HepG2 (cell line): ENCODE measurements at regions of chr15 and their contacts with region 1.

Region 1: GRCh38 chr15:34055853-34056595 is 17.0 kb upstream of the AVEN start:
- DNase-seq: no peak
- ATAC-seq: no peak
- H3K4me3 ChIP-seq: no peak overlapping the region
- H3K27ac ChIP-seq: no peak overlapping the region
- H3K4me1 ChIP-seq: peaks cover 8% of the 10 kb centered on the region; the same call in 1 of the 2 replicates
- H3K27me3 ChIP-seq: no peaks in the 10 kb centered on the region
- CTCF ChIP-seq: no peak
- EP300 ChIP-seq: no peak
- POLR2A ChIP-seq: no peak
- RAD21 ChIP-seq: no peak

Region 2: GRCh38 chr15:33915571-33916407 is 140.2 kb before region 1 on chr15:
- CTCF ChIA-PET with region 1: no interaction called
- POLR2A ChIA-PET with region 1: no interaction called
- in situ Hi-C with region 1: no loop called
- intact Hi-C with region 1: no loop called
- DNase-seq: peak; percentile 11
- ATAC-seq: no peak; the same call in 1 of the 3 replicates
- H3K4me3 ChIP-seq: no peak overlapping the region
- H3K27ac ChIP-seq: no peak overlapping the region
- H3K4me1 ChIP-seq: peaks cover 7% of the 10 kb centered on the region; the same call in 1 of the 2 replicates
- H3K27me3 ChIP-seq: no peaks in the 10 kb centered on the region
- CTCF ChIP-seq: no peak
- EP300 ChIP-seq: no peak
- POLR2A ChIP-seq: no peak
- RAD21 ChIP-seq: no peak

Region 3: DNA sequence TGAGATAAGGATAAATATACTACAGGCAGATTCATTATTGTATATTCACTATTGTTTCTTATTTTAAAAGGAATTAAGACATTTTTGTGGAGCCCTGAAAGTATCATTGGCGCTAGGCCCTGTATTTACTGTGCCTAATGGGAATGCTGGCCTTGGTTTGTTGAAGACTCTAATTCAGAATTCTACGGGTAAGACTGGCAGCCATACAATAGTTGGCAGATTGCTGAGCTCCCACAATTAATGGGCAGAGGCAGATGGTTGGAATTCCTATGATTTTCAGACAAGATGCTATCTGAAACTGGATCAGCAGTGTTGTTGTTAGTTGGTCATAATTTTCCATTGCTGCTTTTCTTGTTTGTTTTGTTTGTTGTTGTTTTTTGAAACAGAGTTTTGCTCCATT is 60.6 kb after region 1 on chr15:
- CTCF ChIA-PET with region 1: no interaction called
- POLR2A ChIA-PET with region 1: no interaction called
- in situ Hi-C with region 1: no loop called
- intact Hi-C with region 1: loop called (anchors 5 kb)
- DNase-seq: no peak
- ATAC-seq: no peak
- H3K4me3 ChIP-seq: no peak overlapping the region
- H3K27ac ChIP-seq: no peak overlapping the region
- H3K4me1 ChIP-seq: no peaks in the 10 kb centered on the region
- H3K27me3 ChIP-seq: no peaks in the 10 kb centered on the region
- CTCF ChIP-seq: no peak
- EP300 ChIP-seq: no peak
- POLR2A ChIP-seq: no peak
- RAD21 ChIP-seq: no peak

Region 4: DNA sequence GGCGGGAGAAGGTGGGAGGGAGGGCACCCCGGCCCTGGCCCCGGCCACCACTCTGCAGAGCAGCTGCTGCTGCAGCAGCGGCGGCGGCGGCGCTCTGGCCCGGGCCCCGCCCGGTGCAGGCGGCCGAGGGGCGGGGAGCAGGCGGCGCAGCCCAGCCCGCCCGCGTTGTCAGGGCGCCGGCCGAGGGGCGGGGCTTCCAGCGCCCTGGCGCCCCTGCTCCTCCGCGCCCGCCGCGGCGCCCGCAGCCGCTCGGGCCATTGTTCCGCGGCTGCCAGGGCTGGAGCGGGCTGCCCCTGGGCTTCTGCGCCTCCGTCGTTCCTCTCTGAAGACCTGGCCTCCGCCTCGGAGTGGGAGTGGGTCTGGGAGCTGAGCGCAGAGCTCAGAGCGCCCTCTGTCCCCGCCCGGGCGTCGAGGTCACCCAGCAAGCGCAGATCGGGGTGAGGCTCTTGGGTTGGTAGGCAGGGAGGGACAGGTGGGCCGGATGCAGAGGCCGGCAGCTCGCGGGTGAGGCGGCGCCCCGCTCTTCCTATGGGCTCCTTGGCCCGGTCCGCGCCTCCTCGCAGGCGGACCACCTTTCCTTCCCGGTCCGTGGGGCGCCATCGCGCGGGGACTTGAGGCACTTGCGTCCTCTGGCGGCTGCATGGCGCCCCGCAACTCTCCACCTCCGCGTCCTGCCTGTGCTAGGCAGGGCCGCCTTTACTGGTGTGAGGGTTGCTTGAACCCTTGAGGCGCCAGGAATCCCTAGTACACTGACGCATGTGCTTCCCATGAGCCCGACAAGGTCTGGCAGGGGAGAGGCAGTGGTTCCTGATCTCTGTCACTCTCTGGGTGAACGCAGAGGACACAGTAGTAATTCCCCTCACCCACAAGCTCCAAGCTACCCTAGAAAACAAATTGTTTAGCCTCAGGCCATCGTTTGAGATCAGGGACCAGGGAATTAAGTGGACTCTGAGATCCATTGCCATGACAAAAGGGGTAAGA is 311.4 kb after region 1 on chr15 and contains the start of gene LPCAT4:
- CTCF ChIA-PET with region 1: no interaction called
- POLR2A ChIA-PET with region 1: no interaction called
- in situ Hi-C with region 1: loop called (anchors 25 kb)
- intact Hi-C with region 1: no loop called
- DNase-seq: peak; percentile 66
- ATAC-seq: peak; percentile 90
- H3K4me3 ChIP-seq: peak within 1 kb of the TSS; percentile 59 to 94 (median 87)
- H3K27ac ChIP-seq: peak within 1 kb of the TSS; percentile 94
- H3K4me1 ChIP-seq: peaks cover 21% of the 10 kb centered on the region
- H3K27me3 ChIP-seq: no peaks in the 10 kb centered on the region
- CTCF ChIP-seq: peak; percentile 98
- EP300 ChIP-seq: 0 out of 4 replicates have a peak, but pooled peaks of 1 of the 2 experiments have one; percentile 18
- POLR2A ChIP-seq: peak; percentile 74 to 87
- RAD21 ChIP-seq: peak; percentile 84
- total RNA-seq, gene LPCAT4: 2.2 and 8.1 TPM in 2 replicates

Region 5: DNA sequence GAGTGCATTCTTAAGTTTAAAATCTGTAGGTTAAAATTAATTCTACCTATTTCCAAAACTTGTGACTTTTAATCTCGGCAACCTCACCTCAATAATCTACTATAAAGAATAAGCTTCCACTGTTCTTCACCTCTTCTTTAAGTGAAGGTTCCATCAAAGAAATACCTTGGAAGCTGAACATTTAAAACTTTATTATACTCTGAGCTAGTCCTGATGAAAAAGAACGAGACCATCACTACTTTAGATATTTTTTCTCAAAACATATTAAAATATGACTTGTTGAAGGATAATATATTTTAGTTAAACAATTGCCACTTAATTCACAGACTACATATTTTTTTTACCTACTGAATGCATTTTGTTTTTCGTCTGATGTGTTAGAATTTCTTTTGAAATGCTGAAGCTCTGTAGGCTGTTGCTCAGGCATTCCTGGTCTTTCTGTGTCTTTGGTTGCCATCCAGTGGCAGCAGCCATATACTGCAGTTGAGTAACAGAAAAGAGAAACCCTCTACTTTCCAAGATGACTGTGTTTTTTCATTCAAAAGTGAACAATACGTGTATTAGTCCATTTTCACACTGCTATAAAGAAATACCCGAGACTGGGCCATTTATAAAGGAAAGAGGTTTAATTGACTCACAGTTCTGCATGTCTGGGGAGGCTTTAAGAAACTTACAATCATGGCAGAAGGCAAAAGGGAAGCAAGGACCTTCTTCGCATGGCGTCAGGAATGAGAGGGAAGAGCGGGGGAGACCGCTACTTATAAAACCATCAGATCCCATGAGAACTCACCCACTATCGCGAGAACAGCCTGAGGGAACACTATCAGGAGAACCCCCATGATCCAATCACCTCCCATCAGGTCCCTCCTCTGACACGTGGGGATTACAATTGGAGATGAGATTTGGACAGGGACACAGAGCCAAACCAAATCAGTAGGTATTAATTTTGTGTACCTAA is 532.0 kb after region 1 on chr15:
- CTCF ChIA-PET with region 1: no interaction called
- POLR2A ChIA-PET with region 1: no interaction called
- in situ Hi-C with region 1: loop called (anchors 25 kb)
- intact Hi-C with region 1: no loop called
- DNase-seq: peak; percentile 80
- ATAC-seq: peak; percentile 42
- H3K4me3 ChIP-seq: peak overlapping the region; percentile 19 to 44 (median 40); a peak in 1 of 6 replicates
- H3K27ac ChIP-seq: no peak overlapping the region
- H3K4me1 ChIP-seq: peaks cover 12% of the 10 kb centered on the region; the same call in 1 of the 2 replicates
- H3K27me3 ChIP-seq: no peaks in the 10 kb centered on the region
- CTCF ChIP-seq: peak; percentile 85
- EP300 ChIP-seq: no peak
- POLR2A ChIP-seq: peak; percentile 78 to 95
- RAD21 ChIP-seq: peak; percentile 67